Endothelial cell of umbilical vein (primary cell): ENCODE measurements at regions of chr5 and their contacts with region 1.

Region 1: GRCh38 chr5:31983851-31984250 is 190.3 kb downstream of the GOLPH3 start:
- DNase-seq: no peak
- H3K4me3 ChIP-seq: no peak overlapping the region
- H3K27ac ChIP-seq: no peak overlapping the region
- H3K4me1 ChIP-seq: no peaks in the 10 kb centered on the region
- H3K27me3 ChIP-seq: no peaks in the 10 kb centered on the region
- CTCF ChIP-seq: no peak
- POLR2A ChIP-seq: no peak

Region 2: GRCh38 chr5:30368064-30368463 is 1615.8 kb before region 1 on chr5:
- CTCF ChIA-PET with region 1: no interaction called
- POLR2A ChIA-PET with region 1: no interaction called
- dilution Hi-C with region 1: no loop called
- intact Hi-C with region 1: no loop called
- DNase-seq: no peak
- H3K4me3 ChIP-seq: no peak overlapping the region
- H3K27ac ChIP-seq: no peak overlapping the region
- H3K4me1 ChIP-seq: no peaks in the 10 kb centered on the region
- H3K27me3 ChIP-seq: no peaks in the 10 kb centered on the region
- CTCF ChIP-seq: no peak
- POLR2A ChIP-seq: no peak

Region 3: GRCh38 chr5:31781772-31782171 is 202.1 kb before region 1 on chr5:
- CTCF ChIA-PET with region 1: no interaction called
- POLR2A ChIA-PET with region 1: no interaction called
- dilution Hi-C with region 1: no loop called
- intact Hi-C with region 1: no loop called
- DNase-seq: no peak
- H3K4me3 ChIP-seq: no peak overlapping the region
- H3K27ac ChIP-seq: no peak overlapping the region
- H3K4me1 ChIP-seq: no peaks in the 10 kb centered on the region
- H3K27me3 ChIP-seq: no peaks in the 10 kb centered on the region
- CTCF ChIP-seq: no peak
- POLR2A ChIP-seq: no peak

Region 4: DNA sequence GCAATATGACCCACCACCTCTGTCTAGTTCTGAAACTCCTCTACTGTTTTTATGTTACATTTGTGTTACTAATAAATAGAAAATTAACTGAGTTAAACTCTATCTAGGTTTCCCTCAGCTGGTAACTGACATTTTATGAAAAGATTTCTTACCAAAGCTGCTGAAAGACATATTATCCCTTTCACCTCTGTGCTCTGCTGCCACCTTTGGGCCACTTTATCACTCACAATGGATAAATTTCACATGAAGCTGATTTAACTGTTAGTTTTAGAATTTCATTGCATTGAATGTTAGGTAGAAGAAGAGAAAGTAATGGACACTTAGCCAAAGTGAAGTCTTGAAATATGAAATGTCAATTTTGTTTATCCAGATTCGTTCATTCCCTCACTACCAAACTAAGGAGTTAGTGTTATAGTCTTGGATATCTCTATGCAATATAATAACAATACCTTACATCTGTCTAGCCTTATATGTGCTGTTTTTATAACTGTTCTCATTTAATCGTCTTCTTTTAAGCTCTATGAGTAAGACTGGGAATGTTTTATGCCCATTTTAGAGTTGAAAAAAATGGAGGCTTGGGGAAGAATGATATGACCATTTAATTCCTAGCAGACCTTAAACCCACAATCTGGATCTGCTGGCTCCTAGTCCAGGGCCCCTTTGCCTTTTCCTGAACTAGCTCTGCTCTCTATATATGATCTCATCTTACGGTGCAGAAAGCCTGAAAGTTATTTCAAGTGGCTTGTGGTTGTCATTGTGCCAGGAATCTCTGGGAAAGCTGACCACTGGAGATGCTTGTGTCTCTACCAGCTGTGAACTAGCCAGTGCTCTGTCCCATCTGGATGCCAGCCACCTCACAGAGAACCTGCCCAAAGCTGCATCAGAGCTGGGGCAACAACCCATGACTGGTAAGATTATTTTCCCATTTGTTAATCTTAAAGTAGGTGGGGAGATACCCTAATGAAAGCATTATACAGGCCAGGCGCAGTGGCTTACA is 93.1 kb after region 1 on chr5:
- CTCF ChIA-PET with region 1: no interaction called
- POLR2A ChIA-PET with region 1: no interaction called
- dilution Hi-C with region 1: no loop called
- intact Hi-C with region 1: no loop called
- DNase-seq: peak; percentile 74
- H3K4me3 ChIP-seq: no peak overlapping the region
- H3K27ac ChIP-seq: no peak overlapping the region
- H3K4me1 ChIP-seq: no peaks in the 10 kb centered on the region
- H3K27me3 ChIP-seq: no peaks in the 10 kb centered on the region
- CTCF ChIP-seq: peak; percentile 49 to 61
- POLR2A ChIP-seq: no peak

Region 5: DNA sequence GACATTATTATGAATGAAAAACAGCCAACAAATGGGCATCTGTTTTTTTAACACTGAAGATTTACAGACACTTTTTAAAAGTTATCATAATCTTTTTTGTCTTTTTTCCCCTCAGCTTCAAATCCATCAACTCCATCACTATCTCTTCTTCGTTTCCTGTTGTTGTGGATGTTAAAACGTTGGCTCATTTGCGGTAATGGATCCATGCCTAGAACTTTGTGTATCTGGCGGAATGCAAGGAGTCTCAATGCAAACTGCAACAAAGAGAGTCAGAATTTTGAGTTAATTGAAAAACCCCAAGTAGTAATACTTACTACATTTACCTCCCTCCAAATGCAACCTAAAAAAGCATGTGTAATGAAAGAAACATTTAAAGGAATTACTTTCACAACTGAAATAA is 371.8 kb after region 1 on chr5:
- CTCF ChIA-PET with region 1: no interaction called
- POLR2A ChIA-PET with region 1: no interaction called
- dilution Hi-C with region 1: no loop called
- intact Hi-C with region 1: loop called (anchors 5 kb)
- DNase-seq: no peak
- H3K4me3 ChIP-seq: no peak overlapping the region
- H3K27ac ChIP-seq: no peak overlapping the region
- H3K4me1 ChIP-seq: no peaks in the 10 kb centered on the region
- H3K27me3 ChIP-seq: no peaks in the 10 kb centered on the region
- CTCF ChIP-seq: no peak
- POLR2A ChIP-seq: no peak